Right ventricle myocardium inferior (tissue), 1 donor: ENCODE measurements at regions of chr14 and their contacts with region 1.

Region 1: DNA sequence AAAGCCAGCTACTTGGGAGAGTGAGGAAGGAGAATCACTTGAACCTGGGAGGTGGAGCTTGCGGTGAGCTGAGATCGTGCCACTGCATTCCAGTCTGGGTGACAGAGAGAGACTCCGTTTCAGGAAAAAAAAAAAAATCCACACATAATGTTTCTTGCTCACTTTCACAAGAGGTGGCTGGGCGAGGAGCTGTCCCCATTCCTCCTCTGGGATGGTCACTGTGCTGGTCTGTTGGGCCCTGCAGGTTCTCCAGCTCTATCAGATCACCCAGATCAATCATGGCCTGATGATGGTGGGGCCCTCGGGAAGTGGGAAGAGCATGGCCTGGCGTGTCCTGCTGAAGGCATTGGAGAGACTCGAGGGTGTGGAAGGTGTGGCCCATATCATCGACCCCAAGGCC is 47.3 kb downstream of the DYNC1H1 start:
- DNase-seq: no peak
- ATAC-seq: no peak

Region 2: DNA sequence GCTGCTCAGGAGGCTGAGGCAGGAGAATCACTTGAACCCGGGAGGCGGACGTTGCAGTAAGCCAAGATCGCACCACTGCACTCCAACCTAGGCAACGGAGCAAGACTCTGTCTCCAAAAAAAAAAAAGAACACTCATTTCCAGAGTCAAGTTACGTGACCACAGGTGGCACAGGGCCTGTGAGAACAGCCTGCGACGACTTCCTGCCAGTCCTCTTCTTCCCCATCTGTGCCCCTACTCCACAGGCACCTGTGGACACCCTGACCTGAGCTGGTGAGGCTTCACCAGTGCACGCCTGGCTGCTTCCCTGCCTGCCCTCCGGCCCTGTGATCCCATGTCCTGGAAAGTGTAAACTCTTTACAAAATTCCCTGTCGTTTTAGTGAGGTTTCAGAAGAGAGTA is 172.4 kb before region 1 on chr14:
- intact Hi-C with region 1: no loop called
- DNase-seq: no peak
- ATAC-seq: no peak

Region 3: DNA sequence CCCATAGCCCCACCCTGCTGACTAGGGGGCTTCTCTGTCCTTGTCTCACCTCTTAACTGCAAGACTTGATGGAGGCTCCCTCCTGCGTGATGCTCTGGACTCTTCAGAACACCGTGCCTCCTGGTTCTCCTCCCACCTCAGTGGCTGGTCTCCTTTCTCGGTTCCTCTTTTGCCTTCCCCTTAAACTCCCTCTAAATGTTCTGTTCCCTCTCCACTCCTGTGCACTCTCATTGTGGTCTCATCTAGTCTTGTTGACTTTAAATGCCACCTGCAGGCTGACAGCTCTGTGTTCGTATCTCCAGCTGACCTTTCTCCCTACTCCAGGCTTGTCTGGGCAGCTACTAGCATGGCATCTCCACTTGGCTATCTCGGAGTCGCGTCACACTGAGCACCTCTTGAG is 18.9 kb before region 1 on chr14:
- intact Hi-C with region 1: loop called (anchors 2 kb)
- DNase-seq: no peak
- ATAC-seq: peak; percentile 70